ENCODE measurements at regions of chr17 and their contacts with region 1.

Region 1: GRCh38 chr17:59619293-59620063 is at the start of gene CLTC:
- DNase-seq: peak; percentile 88 to 89
- H3K4me3 ChIP-seq: peak within 1 kb of the TSS; percentile 76
- H3K27ac ChIP-seq: peak within 1 kb of the TSS; percentile 91
- H3K4me1 ChIP-seq: peaks cover 56% of the 10 kb centered on the region
- H3K27me3 ChIP-seq: no peaks in the 10 kb centered on the region
- CTCF ChIP-seq: no peak
- total RNA-seq, gene CLTC: 164 and 206 TPM in 2 replicates

Region 2: DNA sequence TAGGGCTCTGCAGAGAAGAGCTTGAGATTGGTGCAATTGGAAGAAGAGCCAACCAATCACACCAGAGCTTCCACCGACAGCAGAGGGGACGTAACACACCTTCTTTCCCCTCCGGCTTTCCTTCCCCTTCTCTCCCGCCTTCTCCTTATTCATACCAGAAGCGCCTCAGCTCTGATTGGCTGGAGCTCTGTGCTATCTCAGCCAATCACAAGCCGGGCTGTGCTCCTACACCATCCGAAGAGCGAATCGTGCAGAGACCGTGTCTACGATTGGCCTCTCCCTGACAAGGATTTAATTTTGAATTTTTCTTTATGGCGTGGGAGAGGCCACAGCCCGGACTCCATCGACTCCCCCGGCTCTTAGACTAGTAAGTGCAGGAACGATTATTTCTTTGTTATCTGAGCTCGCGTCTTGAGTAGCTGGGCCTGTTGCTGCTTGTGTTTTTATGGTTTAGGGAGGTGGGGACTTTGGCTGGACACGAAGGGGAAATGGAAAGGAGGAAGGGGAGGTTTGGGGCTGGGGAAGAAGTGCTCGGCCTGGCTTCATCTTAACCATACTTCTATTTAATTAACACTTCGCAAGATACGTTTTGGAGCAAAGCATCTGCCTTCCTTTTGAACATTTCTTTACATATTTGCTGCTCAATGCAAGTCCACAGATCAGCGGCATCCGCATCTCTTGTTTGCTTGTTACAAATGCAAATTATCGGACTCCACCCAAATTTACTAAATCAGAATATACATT is 463.9 kb before region 1 on chr17 and contains the start of gene PRR11:
- CTCF ChIA-PET with region 1: no interaction called
- POLR2A ChIA-PET with region 1: interaction called, 4 read pairs
- intact Hi-C with region 1: loop called (anchors 2 kb)
- DNase-seq: peak; percentile 94 to 100
- H3K4me3 ChIP-seq: peak within 1 kb of the TSS; percentile 80
- H3K27ac ChIP-seq: peak within 1 kb of the TSS; percentile 71
- H3K4me1 ChIP-seq: peaks cover 50% of the 10 kb centered on the region
- H3K27me3 ChIP-seq: no peaks in the 10 kb centered on the region
- CTCF ChIP-seq: no peak
- total RNA-seq, gene PRR11: 87.9 and 109 TPM in 2 replicates

Region 3: GRCh38 chr17:59220376-59221158 is 398.9 kb before region 1 on chr17 and contains the start of gene GDPD1:
- CTCF ChIA-PET with region 1: no interaction called
- POLR2A ChIA-PET with region 1: interaction called, 14 read pairs
- intact Hi-C with region 1: no loop called
- DNase-seq: peak; percentile 91 to 97
- H3K4me3 ChIP-seq: peak within 1 kb of the TSS; percentile 97
- H3K27ac ChIP-seq: peak within 1 kb of the TSS; percentile 57
- H3K4me1 ChIP-seq: peaks cover 23% of the 10 kb centered on the region
- H3K27me3 ChIP-seq: no peaks in the 10 kb centered on the region
- CTCF ChIP-seq: peak; percentile 77
- total RNA-seq, gene GDPD1: 3.1 and 3.4 TPM in 2 replicates

Region 4: GRCh38 chr17:59641799-59642489 is 22.5 kb after region 1 on chr17:
- CTCF ChIA-PET with region 1: no interaction called
- POLR2A ChIA-PET with region 1: interaction called, 9 read pairs
- intact Hi-C with region 1: loop called (anchors 2 kb)
- DNase-seq: peak in 1 of 2 experiments; percentile 57
- H3K4me3 ChIP-seq: peak overlapping the region; percentile 9; the same call in 1 of the 2 replicates
- H3K27ac ChIP-seq: peak overlapping the region; percentile 64
- H3K4me1 ChIP-seq: peaks cover 46% of the 10 kb centered on the region
- H3K27me3 ChIP-seq: no peaks in the 10 kb centered on the region
- CTCF ChIP-seq: no peak

Region 5: DNA sequence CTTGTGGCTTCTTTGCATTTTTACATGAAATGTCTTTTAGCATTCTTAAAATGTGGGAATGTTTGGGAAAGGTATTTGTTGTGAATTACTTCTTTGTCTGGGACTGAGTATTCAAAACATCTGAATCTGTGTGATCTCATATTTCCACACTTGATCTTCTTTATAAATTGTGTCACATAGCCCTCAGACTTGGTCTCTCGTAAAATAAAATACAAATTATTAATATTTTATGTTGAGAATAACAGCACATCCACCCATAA is 191.3 kb after region 1 on chr17:
- CTCF ChIA-PET with region 1: no interaction called
- POLR2A ChIA-PET with region 1: interaction called, 31 read pairs
- intact Hi-C with region 1: no loop called
- DNase-seq: no peak
- H3K4me3 ChIP-seq: no peak overlapping the region
- H3K27ac ChIP-seq: peak overlapping the region; percentile 77
- H3K4me1 ChIP-seq: peaks cover 25% of the 10 kb centered on the region
- H3K27me3 ChIP-seq: no peaks in the 10 kb centered on the region
- CTCF ChIP-seq: no peak